GM12878 (cell line): ENCODE measurements at regions of chr1 and their contacts with region 1.

Region 1: DNA sequence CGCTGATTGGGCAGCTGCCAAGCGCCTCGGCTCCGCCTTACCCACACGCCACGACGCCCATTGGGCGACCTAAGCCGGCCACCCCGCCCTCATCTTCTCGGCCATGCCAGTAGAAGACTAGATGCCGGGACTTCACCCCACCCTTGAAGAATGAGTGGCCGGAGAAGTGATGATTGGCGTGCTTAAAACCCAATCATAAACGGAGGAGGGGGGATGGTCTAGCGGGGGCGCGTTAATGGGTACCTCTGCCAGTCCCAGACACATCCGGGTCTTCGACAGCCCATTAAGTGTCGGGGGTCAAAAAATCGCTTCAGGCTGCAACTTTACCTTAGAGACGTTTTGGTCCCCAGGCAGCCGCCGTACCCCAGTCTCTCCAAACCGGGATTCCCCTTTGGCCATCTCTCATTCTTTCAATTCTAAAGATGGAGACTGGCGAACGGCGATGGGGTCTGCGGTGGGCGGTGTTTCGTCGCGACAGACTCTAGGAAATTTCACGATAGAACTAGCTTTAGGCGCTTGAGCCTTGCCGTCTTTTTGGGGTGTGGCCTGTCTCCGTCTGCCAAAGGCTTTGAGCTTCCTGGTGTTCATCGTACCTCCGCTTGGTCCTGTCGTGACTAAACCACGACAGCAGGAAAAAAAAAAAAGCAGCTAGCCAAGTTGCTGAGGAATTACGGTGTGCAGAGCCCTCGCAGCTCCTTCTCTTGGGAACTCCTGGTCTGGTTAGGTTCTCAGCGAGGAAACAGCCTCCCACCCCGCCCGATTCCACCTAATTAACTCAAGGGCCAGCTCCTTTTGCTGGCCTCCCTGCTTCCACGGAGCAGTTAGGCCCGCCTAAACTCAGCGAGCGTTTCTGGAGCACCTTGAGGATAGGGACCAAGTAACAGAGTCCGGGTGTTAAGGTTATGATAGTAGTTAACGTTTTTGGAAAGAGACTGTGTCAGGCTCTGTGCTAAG is at the start of gene GATAD2B:
- DNase-seq: peak; percentile 100
- ATAC-seq: peak; percentile 96
- H3K4me3 ChIP-seq: peak within 1 kb of the TSS; percentile 98
- H3K27ac ChIP-seq: peak within 1 kb of the TSS; percentile 99
- H3K4me1 ChIP-seq: peaks cover 11% of the 10 kb centered on the region
- H3K27me3 ChIP-seq: no peaks in the 10 kb centered on the region
- CTCF ChIP-seq: no peak
- EP300 ChIP-seq: peak in 1 of 2 experiments; percentile 31; a peak in 1 of 4 replicates
- POLR2A ChIP-seq: peak; percentile 79
- RAD21 ChIP-seq: peak; percentile 20; the same call in 1 of the 2 replicates
- polyA plus RNA-seq, gene GATAD2B: 2.4 to 8.7 TPM

Region 2: DNA sequence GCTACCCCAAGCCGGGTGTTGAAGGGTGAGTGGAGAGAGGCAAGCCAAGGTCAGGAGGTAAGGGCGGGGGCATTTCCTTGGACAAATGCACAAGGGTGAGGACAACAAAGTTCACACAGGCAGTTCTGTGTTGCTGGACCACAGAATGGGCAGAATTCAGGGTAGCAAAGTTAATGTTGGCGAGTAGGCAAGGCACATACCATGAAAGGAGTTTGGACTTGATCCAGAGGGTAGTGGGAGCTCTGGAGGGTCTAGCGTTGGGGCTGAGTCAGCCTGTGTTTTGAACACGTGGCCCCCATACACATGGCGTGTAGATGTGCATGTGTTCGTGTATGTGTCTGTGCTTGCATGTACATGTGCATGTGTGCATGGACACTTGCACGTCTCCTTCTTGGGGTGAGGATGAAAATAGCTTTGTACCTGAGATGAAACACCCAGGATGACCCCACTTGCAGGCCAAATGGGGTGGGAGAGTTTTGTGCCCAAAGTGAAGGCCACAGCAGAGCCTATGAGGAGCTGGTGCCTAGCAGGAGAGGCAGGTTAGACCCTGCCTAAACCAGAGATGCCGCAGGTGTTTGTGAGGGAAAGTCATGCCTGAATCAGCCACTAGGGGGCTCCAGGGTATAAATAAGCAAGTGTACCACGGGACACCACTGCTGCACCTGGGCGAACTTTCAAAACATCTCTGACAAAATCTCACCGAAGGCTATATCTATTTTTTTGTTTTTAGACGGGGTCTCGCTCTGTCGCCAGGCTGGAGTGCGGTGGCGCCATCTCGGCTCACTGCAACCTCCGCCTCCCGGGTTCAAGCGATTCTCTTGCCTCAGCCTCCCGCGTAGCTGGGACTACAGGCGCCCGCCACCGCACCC is 126.2 kb before region 1 on chr1:
- CTCF ChIA-PET with region 1: interaction called, 17 read pairs
- POLR2A ChIA-PET with region 1: interaction called, 3 read pairs
- RAD21 ChIA-PET with region 1: interaction called, 33 read pairs
- SMC1A ChIA-PET with region 1: interaction called, 5 read pairs
- in situ Hi-C with region 1: no loop called
- intact Hi-C with region 1: no loop called
- DNase-seq: no peak
- ATAC-seq: peak; percentile 93
- H3K4me3 ChIP-seq: no peak overlapping the region
- H3K27ac ChIP-seq: no peak overlapping the region
- H3K4me1 ChIP-seq: peaks cover 6% of the 10 kb centered on the region
- H3K27me3 ChIP-seq: no peaks in the 10 kb centered on the region
- CTCF ChIP-seq: peak; percentile 81 to 90 (median 86)
- EP300 ChIP-seq: no peak
- POLR2A ChIP-seq: no peak
- RAD21 ChIP-seq: peak; percentile 88

Region 3: GRCh38 chr1:153816283-153816889 is 106.9 kb before region 1 on chr1:
- CTCF ChIA-PET with region 1: interaction called, 138 read pairs
- POLR2A ChIA-PET with region 1: interaction called, 5 read pairs
- RAD21 ChIA-PET with region 1: interaction called, 13 read pairs
- SMC1A ChIA-PET with region 1: interaction called, 29 read pairs
- in situ Hi-C with region 1: no loop called
- intact Hi-C with region 1: loop called (anchors 1 kb)
- DNase-seq: no peak
- ATAC-seq: no peak
- H3K4me3 ChIP-seq: no peak overlapping the region
- H3K27ac ChIP-seq: no peak overlapping the region
- H3K4me1 ChIP-seq: no peaks in the 10 kb centered on the region; the same call in 1 of the 2 replicates
- H3K27me3 ChIP-seq: no peaks in the 10 kb centered on the region
- CTCF ChIP-seq: no peak
- EP300 ChIP-seq: no peak
- POLR2A ChIP-seq: no peak
- RAD21 ChIP-seq: no peak

Region 4: GRCh38 chr1:153842006-153842471 is 81.2 kb before region 1 on chr1:
- CTCF ChIA-PET with region 1: interaction called, 6 read pairs
- POLR2A ChIA-PET with region 1: interaction called, 8 read pairs
- RAD21 ChIA-PET with region 1: interaction called, 19 read pairs
- SMC1A ChIA-PET with region 1: interaction called, 5 read pairs
- in situ Hi-C with region 1: no loop called
- intact Hi-C with region 1: loop called (anchors 5 kb)
- DNase-seq: peak; percentile 82
- ATAC-seq: peak; percentile 86
- H3K4me3 ChIP-seq: no peak overlapping the region
- H3K27ac ChIP-seq: peak overlapping the region; percentile 72
- H3K4me1 ChIP-seq: peaks cover 28% of the 10 kb centered on the region
- H3K27me3 ChIP-seq: no peaks in the 10 kb centered on the region
- CTCF ChIP-seq: no peak
- EP300 ChIP-seq: peak in 1 of 2 experiments; percentile 59; a peak in 1 of 4 replicates
- POLR2A ChIP-seq: no peak
- RAD21 ChIP-seq: no peak

Region 5: DNA sequence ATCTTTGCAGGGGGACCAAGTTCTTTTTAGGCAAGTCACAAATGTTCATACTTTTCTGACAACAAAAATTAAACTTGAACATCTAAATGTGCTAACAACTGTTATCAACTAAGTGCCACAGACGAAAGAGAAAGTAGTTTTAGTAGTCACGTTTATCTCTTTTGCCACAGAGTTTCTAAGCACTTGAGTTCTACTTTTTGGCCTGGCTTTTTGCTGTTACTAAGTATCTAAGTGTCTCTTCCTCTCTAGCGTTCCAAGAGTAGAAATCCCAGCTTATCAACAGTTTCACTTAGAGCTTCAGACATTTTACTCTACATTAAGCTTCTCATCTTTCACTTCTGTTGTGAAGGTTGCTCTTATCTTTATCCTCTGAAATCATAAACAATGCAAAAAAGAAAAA is 34.7 kb before region 1 on chr1:
- CTCF ChIA-PET with region 1: interaction called, 20 read pairs
- POLR2A ChIA-PET with region 1: no interaction called
- RAD21 ChIA-PET with region 1: interaction called, 7 read pairs
- SMC1A ChIA-PET with region 1: interaction called, 5 read pairs
- in situ Hi-C with region 1: no loop called
- intact Hi-C with region 1: no loop called
- DNase-seq: no peak
- ATAC-seq: peak; percentile 81
- H3K4me3 ChIP-seq: peak overlapping the region; percentile 16; the same call in 1 of the 2 replicates
- H3K27ac ChIP-seq: peak overlapping the region; percentile 53; the same call in 1 of the 2 replicates
- H3K4me1 ChIP-seq: peaks cover 13% of the 10 kb centered on the region
- H3K27me3 ChIP-seq: no peaks in the 10 kb centered on the region
- CTCF ChIP-seq: no peak
- EP300 ChIP-seq: no peak
- POLR2A ChIP-seq: no peak
- RAD21 ChIP-seq: no peak

Region 6: GRCh38 chr1:153946622-153947241 is 23.5 kb after region 1 on chr1 and contains the start of gene DENND4B:
- CTCF ChIA-PET with region 1: interaction called, 54 read pairs
- POLR2A ChIA-PET with region 1: interaction called, 83 read pairs
- RAD21 ChIA-PET with region 1: interaction called, 55 read pairs
- SMC1A ChIA-PET with region 1: interaction called, 59 read pairs
- in situ Hi-C with region 1: no loop called
- intact Hi-C with region 1: loop called (anchors 2 kb)
- DNase-seq: no peak
- ATAC-seq: peak; percentile 80
- H3K4me3 ChIP-seq: peak within 1 kb of the TSS; percentile 100
- H3K27ac ChIP-seq: peak within 1 kb of the TSS; percentile 95
- H3K4me1 ChIP-seq: peaks cover 21% of the 10 kb centered on the region
- H3K27me3 ChIP-seq: no peaks in the 10 kb centered on the region
- CTCF ChIP-seq: peak; percentile 78 to 95 (median 90)
- EP300 ChIP-seq: no peak
- POLR2A ChIP-seq: peak; percentile 41
- RAD21 ChIP-seq: peak; percentile 65
- polyA plus RNA-seq, gene DENND4B: 12.0 to 13.4 TPM

Region 7: GRCh38 chr1:153977250-153978240 is 54.3 kb after region 1 on chr1 and contains the start of gene JTB:
- CTCF ChIA-PET with region 1: interaction called, 6 read pairs
- POLR2A ChIA-PET with region 1: interaction called, 25 read pairs
- RAD21 ChIA-PET with region 1: interaction called, 29 read pairs
- SMC1A ChIA-PET with region 1: interaction called, 4 read pairs
- in situ Hi-C with region 1: no loop called
- intact Hi-C with region 1: no loop called
- DNase-seq: no peak
- ATAC-seq: peak; percentile 95
- H3K4me3 ChIP-seq: peak within 1 kb of the TSS; percentile 87
- H3K27ac ChIP-seq: peak within 1 kb of the TSS; percentile 86
- H3K4me1 ChIP-seq: peaks cover 7% of the 10 kb centered on the region
- H3K27me3 ChIP-seq: no peaks in the 10 kb centered on the region
- CTCF ChIP-seq: no peak
- EP300 ChIP-seq: no peak
- POLR2A ChIP-seq: peak; percentile 95
- RAD21 ChIP-seq: no peak
- polyA plus RNA-seq, gene JTB: 25.0 to 67.7 TPM